ENCODE measurements at regions of chr6 and their contacts with region 1.

Region 1: GRCh38 chr6:43075670-43076463 is at the start of gene PTK7:
- DNase-seq: peak; percentile 54
- ATAC-seq: peak; percentile 77
- H3K4me3 ChIP-seq: peak within 1 kb of the TSS; percentile 76
- H3K27ac ChIP-seq: peak within 1 kb of the TSS; percentile 98
- H3K4me1 ChIP-seq: peaks cover 25% of the 10 kb centered on the region
- H3K27me3 ChIP-seq: no peaks in the 10 kb centered on the region
- CTCF ChIP-seq: no peak
- POLR2A ChIP-seq: no peak
- RAD21 ChIP-seq: no peak
- total RNA-seq, gene PTK7: 44.4 and 47.1 TPM in 2 replicates

Region 2: DNA sequence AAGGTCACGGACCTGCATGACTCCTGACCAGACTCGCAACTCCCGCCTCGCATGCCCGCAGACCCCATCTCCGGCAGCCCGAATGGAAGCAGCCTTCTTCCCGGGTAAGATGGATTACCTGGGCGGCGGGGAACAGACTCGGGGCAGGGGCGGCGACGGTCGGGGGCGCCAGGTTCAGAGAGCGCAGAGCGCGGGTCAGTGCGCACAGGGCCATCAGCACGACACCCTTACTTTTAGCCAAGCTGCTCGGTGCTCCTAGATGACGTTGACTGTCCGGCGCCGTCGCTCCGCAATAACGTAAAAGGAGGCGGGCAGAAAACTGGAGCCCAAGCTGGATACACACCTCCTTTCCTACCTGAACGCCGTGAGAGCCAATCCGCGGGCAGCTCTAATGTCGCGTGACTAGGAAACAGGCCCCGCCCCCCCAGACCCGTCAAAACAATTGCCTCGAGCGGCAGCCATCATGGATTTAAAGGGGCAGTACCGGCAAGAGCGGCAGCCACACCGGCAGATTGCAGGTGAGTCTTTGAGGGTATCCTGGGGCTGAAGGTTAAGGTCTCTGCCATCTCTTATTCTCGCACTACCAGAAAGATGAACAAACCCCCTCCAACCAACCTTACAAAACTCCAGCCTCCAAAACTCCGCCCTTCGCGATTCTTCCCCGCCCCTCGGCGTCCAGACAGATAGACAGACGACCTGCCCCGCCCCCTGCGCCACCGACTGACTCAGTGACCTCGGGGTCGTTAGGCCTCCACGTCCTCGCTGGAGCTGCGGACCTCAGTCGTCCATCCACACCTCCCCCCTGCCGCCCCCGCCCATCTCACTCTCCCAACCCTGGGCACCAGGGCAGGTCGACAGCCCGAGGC is 16.5 kb before region 1 on chr6 and contains the starts of genes KLC4 and MRPL2:
- CTCF ChIA-PET with region 1: no interaction called
- POLR2A ChIA-PET with region 1: no interaction called
- dilution Hi-C with region 1: no loop called
- in situ Hi-C with region 1: no loop called
- intact Hi-C with region 1: loop called (anchors 2 kb)
- DNase-seq: peak; percentile 98
- ATAC-seq: peak; percentile 99
- H3K4me3 ChIP-seq: peak within 1 kb of the TSS; percentile 76
- H3K27ac ChIP-seq: peak within 1 kb of the TSS; percentile 93
- H3K4me1 ChIP-seq: peaks cover 9% of the 10 kb centered on the region; the same call in 1 of the 2 replicates
- H3K27me3 ChIP-seq: no peaks in the 10 kb centered on the region
- CTCF ChIP-seq: no peak
- POLR2A ChIP-seq: peak; percentile 66
- RAD21 ChIP-seq: no peak
- total RNA-seq, gene KLC4: 9.7 and 10.9 TPM in 2 replicates
- total RNA-seq, gene MRPL2: 15.8 and 18.1 TPM in 2 replicates

Region 3: GRCh38 chr6:43113431-43114260 is 37.8 kb after region 1 on chr6:
- CTCF ChIA-PET with region 1: no interaction called
- POLR2A ChIA-PET with region 1: no interaction called
- dilution Hi-C with region 1: no loop called
- in situ Hi-C with region 1: no loop called
- intact Hi-C with region 1: loop called (anchors 1 kb)
- DNase-seq: no peak
- ATAC-seq: peak; percentile 25
- H3K4me3 ChIP-seq: no peak overlapping the region
- H3K27ac ChIP-seq: peak overlapping the region; percentile 91
- H3K4me1 ChIP-seq: peaks cover 28% of the 10 kb centered on the region
- H3K27me3 ChIP-seq: no peaks in the 10 kb centered on the region
- CTCF ChIP-seq: no peak
- POLR2A ChIP-seq: no peak
- RAD21 ChIP-seq: no peak

Region 4: GRCh38 chr6:43129434-43130194 is 53.7 kb after region 1 on chr6:
- CTCF ChIA-PET with region 1: interaction called, 4 read pairs
- POLR2A ChIA-PET with region 1: no interaction called
- dilution Hi-C with region 1: no loop called
- in situ Hi-C with region 1: loop called (anchors 5 kb)
- intact Hi-C with region 1: no loop called
- DNase-seq: peak; percentile 35
- ATAC-seq: peak; percentile 82
- H3K4me3 ChIP-seq: no peak overlapping the region
- H3K27ac ChIP-seq: no peak overlapping the region
- H3K4me1 ChIP-seq: peaks cover 26% of the 10 kb centered on the region
- H3K27me3 ChIP-seq: no peaks in the 10 kb centered on the region
- CTCF ChIP-seq: peak; percentile 77
- POLR2A ChIP-seq: no peak
- RAD21 ChIP-seq: peak; percentile 91

Measured in IMR-90 (cell line).